ENCODE measurements at regions of chr10 and their contacts with region 1.

Region 1: DNA sequence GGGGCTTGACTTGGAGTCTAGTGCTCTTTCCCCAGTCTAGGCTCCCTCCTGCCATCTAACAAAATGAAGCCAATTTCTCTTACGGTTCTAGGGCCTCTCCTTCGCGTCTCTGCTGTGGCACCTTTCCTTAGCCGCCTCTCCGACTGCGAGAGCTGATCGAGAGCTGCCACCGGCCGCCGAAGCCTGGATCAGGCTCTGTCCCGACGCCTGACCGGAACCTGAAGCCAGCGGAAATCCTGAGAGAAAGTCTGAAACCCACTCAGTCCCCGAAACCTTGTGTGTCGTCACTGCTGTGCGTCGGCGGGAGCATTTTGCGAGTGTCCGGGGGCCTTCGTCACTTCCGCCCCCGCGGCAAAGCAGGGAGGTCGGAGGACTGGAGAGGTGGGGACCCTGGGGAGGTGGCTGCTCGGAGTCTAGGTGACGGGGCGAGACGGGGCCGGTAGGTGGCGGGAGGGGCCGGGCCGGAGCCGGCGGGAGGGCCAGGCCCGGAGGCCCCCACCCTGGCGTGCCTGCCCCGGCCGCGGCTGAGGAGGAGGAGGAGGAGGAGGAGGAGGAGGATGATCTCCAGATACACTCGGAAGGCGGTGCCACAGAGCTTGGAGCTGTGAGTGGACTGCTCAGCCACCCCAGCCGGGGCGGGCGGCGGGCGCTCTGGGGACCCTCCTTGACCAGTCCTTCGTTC is at the starts of genes ECD and FAM149B1:
- DNase-seq: peak; percentile 95
- H3K4me3 ChIP-seq: peak within 1 kb of the TSS; percentile 76 to 94 (median 88)
- H3K27ac ChIP-seq: peak within 1 kb of the TSS; percentile 96 to 99 (median 96)
- H3K4me1 ChIP-seq: peaks cover 11 to 49% (median 19%) of the 10 kb centered on the region in 4 donors
- H3K27me3 ChIP-seq: no peaks in the 10 kb centered on the region
- CTCF ChIP-seq: peak in 3 of 5 experiments; percentile 25 to 44 (median 26)
- EP300 ChIP-seq: no peak
- POLR2A ChIP-seq: peak; percentile 96
- total RNA-seq, gene ECD: 6.4 to 27.0 (median 24.7) TPM
- total RNA-seq, gene FAM149B1: 9.7 to 32.0 (median 17.3) TPM

Region 2: DNA sequence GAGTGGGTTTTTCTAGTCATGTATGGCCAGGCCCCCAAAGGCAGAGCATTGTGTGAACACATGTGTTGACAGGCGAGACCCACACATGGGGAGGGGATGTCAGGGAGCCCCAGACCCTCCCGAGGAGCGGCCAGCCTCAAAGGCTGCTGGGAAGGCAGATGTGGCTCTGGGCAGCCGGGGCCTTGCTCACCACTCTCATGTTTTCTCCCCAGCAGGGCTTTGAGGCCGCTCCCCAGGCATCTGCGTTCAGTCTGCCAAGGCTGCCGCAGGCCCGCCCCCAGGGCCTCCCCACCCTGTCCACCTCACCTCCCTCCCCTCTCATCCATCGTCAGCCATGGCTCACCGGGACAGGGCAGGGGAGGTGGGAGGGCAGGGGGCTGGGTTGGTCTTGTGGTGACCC is 1378.1 kb before region 1 on chr10:
- in situ Hi-C with region 1: no loop called
- intact Hi-C with region 1: loop called (anchors 5 kb)
- DNase-seq: no peak
- H3K4me3 ChIP-seq: no peak overlapping the region
- H3K27ac ChIP-seq: no peak overlapping the region
- H3K4me1 ChIP-seq: no peaks in the 10 kb centered on the region
- H3K27me3 ChIP-seq: no peaks in the 10 kb centered on the region
- CTCF ChIP-seq: no peak
- EP300 ChIP-seq: no peak
- POLR2A ChIP-seq: no peak

Region 3: GRCh38 chr10:73096449-73097304 is 71.2 kb before region 1 on chr10 and contains the start of gene P4HA1:
- in situ Hi-C with region 1: loop called in 2 of 4 experiments (anchors 10 kb)
- intact Hi-C with region 1: no loop called
- DNase-seq: peak; percentile 99
- H3K4me3 ChIP-seq: peak within 1 kb of the TSS; percentile 68 to 96 (median 84)
- H3K27ac ChIP-seq: peak within 1 kb of the TSS; percentile 90 to 98 (median 96)
- H3K4me1 ChIP-seq: peaks cover 6 to 18% (median 10%) of the 10 kb centered on the region in 4 donors
- H3K27me3 ChIP-seq: no peaks in the 10 kb centered on the region
- CTCF ChIP-seq: peak; percentile 49 to 76 (median 61)
- EP300 ChIP-seq: no peak
- POLR2A ChIP-seq: peak; percentile 97
- total RNA-seq, gene P4HA1: 10.5 to 28.6 (median 14.4) TPM

Region 4: GRCh38 chr10:73105378-73105777 is 62.5 kb before region 1 on chr10:
- in situ Hi-C with region 1: loop called in 1 of 4 experiments (anchors 10 kb)
- intact Hi-C with region 1: no loop called
- DNase-seq: no peak
- H3K4me3 ChIP-seq: no peak overlapping the region
- H3K27ac ChIP-seq: no peak overlapping the region
- H3K4me1 ChIP-seq: no peaks in the 10 kb centered on the region
- H3K27me3 ChIP-seq: no peaks in the 10 kb centered on the region
- CTCF ChIP-seq: no peak
- EP300 ChIP-seq: no peak
- POLR2A ChIP-seq: no peak

Measured in transverse colon (tissue), 4 donors.